WTC11 (cell line): ENCODE measurements at regions of chr14 and their contacts with region 1.

Region 1: GRCh38 chr14:77076113-77076631 is 21.9 kb upstream of the CIPC start:
- DNase-seq: no peak
- ATAC-seq: peak; percentile 72
- H3K4me3 Mint-ChIP-seq: peak overlapping the region; percentile 51
- H3K27ac Mint-ChIP-seq: peak overlapping the region; percentile 93
- H3K4me1 Mint-ChIP-seq: peaks cover 31% of the 10 kb centered on the region
- H3K27me3 Mint-ChIP-seq: no peaks in the 10 kb centered on the region
- CTCF ChIP-seq: no peak

Region 2: GRCh38 chr14:76870166-76870565 is 206.0 kb before region 1 on chr14:
- CTCF ChIA-PET with region 1: interaction called, 249 read pairs
- POLR2A ChIA-PET with region 1: no interaction called
- DNase-seq: peak; percentile 44
- ATAC-seq: no peak
- H3K4me3 Mint-ChIP-seq: no peak overlapping the region
- H3K27ac Mint-ChIP-seq: no peak overlapping the region
- H3K4me1 Mint-ChIP-seq: peaks cover 12% of the 10 kb centered on the region
- H3K27me3 Mint-ChIP-seq: peaks cover 3% of the 10 kb centered on the region; the same call in 1 of the 2 replicates
- CTCF ChIP-seq: no peak

Region 3: GRCh38 chr14:77086017-77086736 is 10.0 kb after region 1 on chr14:
- CTCF ChIA-PET with region 1: interaction called, 50 read pairs
- POLR2A ChIA-PET with region 1: interaction called, 6 read pairs
- DNase-seq: no peak
- ATAC-seq: peak; percentile 23; the same call in 1 of the 2 replicates
- H3K4me3 Mint-ChIP-seq: no peak overlapping the region
- H3K27ac Mint-ChIP-seq: peak overlapping the region; percentile 97
- H3K4me1 Mint-ChIP-seq: peaks cover 49% of the 10 kb centered on the region
- H3K27me3 Mint-ChIP-seq: no peaks in the 10 kb centered on the region; the same call in none of the 2 replicates
- CTCF ChIP-seq: no peak

Region 4: DNA sequence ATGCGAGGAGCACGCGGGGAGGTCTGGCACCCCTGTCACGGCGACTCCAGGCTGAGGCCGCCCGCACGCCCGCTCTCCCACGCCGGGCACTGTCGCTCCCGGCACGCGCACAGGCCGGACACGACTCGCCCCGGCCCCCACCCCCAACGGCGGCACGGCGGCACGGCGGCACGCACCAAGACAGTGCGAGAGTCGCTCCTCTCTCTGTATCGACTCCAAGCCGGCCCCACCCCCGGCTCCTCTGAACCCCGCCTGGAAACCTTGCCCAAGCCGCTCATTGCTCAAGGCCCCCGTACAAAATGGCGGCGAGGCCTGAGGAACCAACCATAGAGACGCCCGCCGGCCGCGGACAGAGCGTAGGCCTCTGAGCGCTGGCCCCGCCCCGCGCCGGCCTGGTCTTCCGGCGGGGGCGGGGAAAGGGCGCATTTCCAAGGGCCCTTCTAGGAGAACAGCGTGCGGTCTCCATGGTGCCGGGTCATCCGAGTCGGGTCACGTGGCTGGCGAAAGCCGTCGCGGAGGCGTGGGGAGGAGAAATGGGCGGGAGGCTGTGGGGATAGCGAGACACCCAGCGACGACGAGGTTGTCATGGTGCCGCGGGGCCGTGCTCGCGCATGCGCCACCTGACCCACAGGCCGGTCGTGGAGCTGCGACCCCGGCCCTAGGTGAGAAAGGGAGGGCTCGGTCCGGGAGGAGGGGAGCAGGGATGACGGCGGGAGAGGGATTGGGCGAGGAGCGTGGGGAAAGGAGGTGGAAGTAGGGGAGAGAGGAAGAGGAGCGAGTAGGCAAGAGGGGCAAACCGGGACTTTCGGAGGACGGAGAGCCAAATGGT is 21.7 kb after region 1 on chr14 and contains the start of gene CIPC:
- CTCF ChIA-PET with region 1: interaction called, 74 read pairs
- POLR2A ChIA-PET with region 1: interaction called, 6 read pairs
- DNase-seq: peak; percentile 97
- ATAC-seq: peak; percentile 94
- H3K4me3 Mint-ChIP-seq: peak within 1 kb of the TSS; percentile 84
- H3K27ac Mint-ChIP-seq: peak within 1 kb of the TSS; percentile 95
- H3K4me1 Mint-ChIP-seq: peaks cover 52% of the 10 kb centered on the region
- H3K27me3 Mint-ChIP-seq: no peaks in the 10 kb centered on the region
- CTCF ChIP-seq: no peak
- total RNA-seq, gene CIPC: 22.5 to 25.4 TPM (median 24.2 TPM) in 3 replicates

Region 5: GRCh38 chr14:77390188-77390587 is 314.0 kb after region 1 on chr14:
- CTCF ChIA-PET with region 1: no interaction called
- POLR2A ChIA-PET with region 1: no interaction called
- DNase-seq: no peak
- ATAC-seq: no peak
- H3K4me3 Mint-ChIP-seq: no peak overlapping the region
- H3K27ac Mint-ChIP-seq: no peak overlapping the region
- H3K4me1 Mint-ChIP-seq: no peaks in the 10 kb centered on the region
- H3K27me3 Mint-ChIP-seq: no peaks in the 10 kb centered on the region
- CTCF ChIP-seq: no peak